ENCODE measurements at regions of chr4 and their contacts with region 1.

Region 1: DNA sequence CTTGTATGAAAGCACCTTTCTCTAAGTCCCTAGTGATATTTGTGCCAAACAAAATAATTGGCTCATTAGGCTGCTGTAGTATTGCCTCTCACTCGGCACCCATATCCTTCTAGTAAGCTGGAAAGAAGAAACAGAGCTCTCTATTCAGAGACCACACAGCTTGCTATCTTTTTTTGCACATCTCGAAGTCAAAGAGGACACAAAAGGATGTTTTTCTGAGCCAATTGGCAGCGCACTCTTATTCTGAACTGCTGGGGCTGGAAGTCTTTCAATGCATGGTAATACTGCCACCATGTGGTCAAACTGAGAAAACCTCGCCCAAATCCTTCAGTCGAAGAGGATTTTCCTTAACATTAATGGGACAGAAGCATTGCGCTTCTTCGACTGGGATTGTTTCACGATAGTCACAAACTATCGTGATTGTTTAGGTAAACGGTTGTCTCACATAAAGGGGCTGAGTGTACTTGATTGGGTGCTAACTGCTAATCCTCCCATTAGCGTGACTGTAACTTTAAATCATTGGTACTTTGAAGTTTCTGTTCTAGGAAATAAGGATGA is 572.0 kb upstream of the LCORL start:
- DNase-seq: peak; percentile 51
- H3K4me3 ChIP-seq: no peak overlapping the region
- H3K27ac ChIP-seq: no peak overlapping the region
- H3K4me1 ChIP-seq: no peaks in the 10 kb centered on the region
- H3K27me3 ChIP-seq: no peaks in the 10 kb centered on the region
- CTCF ChIP-seq: peak; percentile 68 to 83

Region 2: DNA sequence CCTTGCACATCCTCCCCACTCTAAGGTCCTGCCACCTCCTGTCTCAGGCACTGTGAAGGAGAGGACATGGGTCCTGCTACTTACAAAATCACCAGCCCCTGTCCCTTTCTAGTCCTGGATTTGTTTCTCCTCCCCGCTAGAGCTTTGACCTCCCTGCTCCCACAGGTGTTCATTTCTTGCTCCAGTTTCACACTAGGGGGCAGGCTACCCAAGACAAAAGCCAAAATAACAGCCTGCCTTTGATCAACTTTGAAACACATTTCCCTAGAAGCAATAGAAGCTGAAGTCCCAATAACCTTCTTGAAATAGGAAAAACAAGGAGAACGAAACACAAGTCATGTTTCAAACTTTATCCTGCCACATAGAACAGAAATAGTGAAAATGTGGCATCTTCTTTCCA is 1246.1 kb before region 1 on chr4:
- CTCF ChIA-PET with region 1: no interaction called
- dilution Hi-C with region 1: no loop called
- in situ Hi-C with region 1: no loop called
- intact Hi-C with region 1: loop called (anchors 5 kb)
- DNase-seq: peak; percentile 3
- H3K4me3 ChIP-seq: no peak overlapping the region
- H3K27ac ChIP-seq: no peak overlapping the region
- H3K4me1 ChIP-seq: no peaks in the 10 kb centered on the region
- H3K27me3 ChIP-seq: no peaks in the 10 kb centered on the region
- CTCF ChIP-seq: peak; percentile 37 to 61

Region 3: DNA sequence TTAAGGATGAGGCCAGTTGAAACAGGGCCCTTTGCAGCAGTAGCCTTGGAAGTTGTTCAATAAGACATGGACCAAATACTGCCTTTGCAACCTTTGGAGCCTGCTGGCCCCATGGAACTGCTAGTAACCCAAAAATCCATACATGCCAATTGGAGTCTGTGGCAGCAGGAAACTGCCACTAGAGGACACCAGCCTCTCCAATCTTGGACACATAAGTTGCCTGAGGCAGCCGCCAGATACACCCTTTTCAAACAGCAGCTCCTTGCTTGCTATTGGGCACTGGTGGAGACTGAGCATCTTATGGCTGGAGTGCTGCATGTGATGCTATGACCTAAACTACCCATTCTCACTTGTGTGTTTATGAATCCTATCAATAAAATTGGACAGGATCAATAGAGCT is 1031.4 kb before region 1 on chr4:
- CTCF ChIA-PET with region 1: no interaction called
- dilution Hi-C with region 1: no loop called
- in situ Hi-C with region 1: loop called (anchors 25 kb)
- intact Hi-C with region 1: no loop called
- DNase-seq: no peak
- H3K4me3 ChIP-seq: no peak overlapping the region
- H3K27ac ChIP-seq: no peak overlapping the region
- H3K4me1 ChIP-seq: peaks cover 11% of the 10 kb centered on the region
- H3K27me3 ChIP-seq: no peaks in the 10 kb centered on the region
- CTCF ChIP-seq: peak in 1 of 2 donors; percentile 2

Region 4: DNA sequence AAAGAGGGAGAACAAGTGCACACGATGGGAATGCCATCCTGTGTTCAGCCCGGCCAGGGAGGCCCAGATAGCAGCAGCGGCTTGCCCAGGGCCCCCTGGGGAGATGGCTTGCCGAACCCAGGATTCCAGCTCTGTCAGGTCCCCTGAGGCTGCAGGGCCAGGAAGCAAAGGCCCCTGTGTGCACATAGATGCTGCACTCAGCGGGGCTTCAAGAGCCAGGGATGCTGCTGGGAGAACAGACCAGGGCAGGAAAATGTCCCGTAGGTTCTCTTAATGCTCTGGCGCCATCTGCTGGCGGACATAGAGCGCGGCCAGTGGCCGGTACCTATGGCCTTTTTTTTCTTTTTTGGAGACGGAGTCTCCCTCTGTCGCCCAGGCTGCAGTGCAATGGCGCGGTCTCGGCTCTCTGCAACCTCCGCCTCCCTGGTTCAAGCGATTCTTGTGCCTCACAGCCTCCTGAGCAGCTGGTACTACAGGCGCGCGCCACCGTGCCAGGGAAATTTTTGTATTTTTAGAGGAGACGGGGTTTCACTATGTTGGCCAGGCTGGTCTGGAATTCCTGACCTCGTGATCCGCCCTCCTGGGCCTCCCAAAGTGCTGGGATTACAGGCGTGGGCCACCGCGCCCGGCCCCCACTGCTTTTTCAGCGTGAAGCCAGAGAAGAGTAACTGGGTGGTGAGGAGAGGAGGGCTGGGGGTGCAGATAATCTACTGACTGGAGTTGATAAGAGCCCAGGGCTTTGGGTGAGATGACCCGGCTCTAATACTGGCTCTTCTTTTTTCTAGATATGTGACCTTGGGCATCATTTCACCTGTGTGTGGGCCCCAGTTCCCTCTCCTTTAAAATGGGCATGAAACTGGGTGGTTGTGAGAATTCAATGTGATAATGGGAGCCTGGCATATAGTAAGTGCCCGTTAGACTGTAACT is 956.6 kb before region 1 on chr4:
- CTCF ChIA-PET with region 1: no interaction called
- dilution Hi-C with region 1: no loop called
- in situ Hi-C with region 1: no loop called
- intact Hi-C with region 1: loop called (anchors 2 kb)
- DNase-seq: peak; percentile 54
- H3K4me3 ChIP-seq: no peak overlapping the region
- H3K27ac ChIP-seq: no peak overlapping the region
- H3K4me1 ChIP-seq: no peaks in the 10 kb centered on the region
- H3K27me3 ChIP-seq: no peaks in the 10 kb centered on the region
- CTCF ChIP-seq: peak; percentile 74 to 89

Region 5: DNA sequence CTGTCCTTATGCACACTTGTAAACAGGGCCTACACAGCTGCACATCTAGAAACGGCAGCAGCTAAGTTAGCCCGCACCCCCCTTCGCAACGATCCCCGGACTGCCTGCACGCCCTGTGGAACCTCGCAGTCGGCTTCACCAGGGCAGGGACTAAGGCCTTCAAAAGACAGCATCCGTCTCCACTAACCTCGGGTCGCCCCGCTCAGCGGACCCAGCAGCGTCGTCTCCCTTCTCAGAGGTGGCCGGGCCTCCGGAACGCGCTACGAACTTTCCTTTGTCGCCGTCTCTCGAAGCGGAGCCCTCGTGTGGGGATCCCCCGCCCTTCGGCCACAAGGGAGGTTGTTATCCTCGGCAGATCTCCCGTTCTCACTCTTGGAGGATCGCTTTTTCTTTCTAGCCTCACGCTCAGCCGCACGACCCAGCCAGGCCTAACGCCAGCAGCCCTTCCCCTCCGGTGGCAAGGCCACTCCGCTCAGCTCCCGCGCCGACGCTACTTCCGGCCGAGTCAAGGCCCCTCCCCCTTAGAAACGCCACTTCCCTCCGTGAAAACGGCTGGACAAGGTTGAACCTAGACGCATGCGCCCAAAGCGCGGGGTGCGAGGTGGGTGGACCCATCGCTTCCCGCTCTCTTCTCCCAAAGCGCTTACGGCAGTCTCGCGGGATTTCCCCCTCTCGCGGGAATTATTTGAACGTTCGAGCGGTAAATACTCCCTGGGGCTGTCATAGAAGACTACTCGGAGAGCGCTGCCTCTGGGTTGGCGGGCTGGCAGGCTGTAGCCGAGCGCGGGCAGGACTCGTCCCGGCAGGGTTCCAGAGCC is 783.1 kb before region 1 on chr4 and contains the starts of genes DCAF16 and NCAPG:
- CTCF ChIA-PET with region 1: no interaction called
- dilution Hi-C with region 1: no loop called
- in situ Hi-C with region 1: loop called (anchors 10 to 25 kb)
- intact Hi-C with region 1: no loop called
- DNase-seq: peak; percentile 99
- H3K4me3 ChIP-seq: peak within 1 kb of the TSS; percentile 82 to 90 (median 83)
- H3K27ac ChIP-seq: peak within 1 kb of the TSS; percentile 91
- H3K4me1 ChIP-seq: peaks cover 21% of the 10 kb centered on the region
- H3K27me3 ChIP-seq: no peaks in the 10 kb centered on the region
- CTCF ChIP-seq: no peak
- total RNA-seq, gene DCAF16: 28.5 to 32.7 TPM
- total RNA-seq, gene NCAPG: 2.0 to 39.4 TPM

Region 6: GRCh38 chr4:17934286-17934685 is 659.2 kb before region 1 on chr4:
- CTCF ChIA-PET with region 1: no interaction called
- dilution Hi-C with region 1: no loop called
- in situ Hi-C with region 1: no loop called
- intact Hi-C with region 1: loop called (anchors 2 kb)
- DNase-seq: no peak
- H3K4me3 ChIP-seq: no peak overlapping the region
- H3K27ac ChIP-seq: no peak overlapping the region
- H3K4me1 ChIP-seq: no peaks in the 10 kb centered on the region
- H3K27me3 ChIP-seq: no peaks in the 10 kb centered on the region
- CTCF ChIP-seq: peak in 1 of 2 donors; percentile 13

Measured in mammary epithelial cell (primary cell).